ENCODE measurements at regions of chr17 and their contacts with region 1.

Region 1: GRCh38 chr17:40358323-40359038 is 6.1 kb downstream of the GJD3 start:
- DNase-seq: peak; percentile 88 to 97 (median 93)
- ATAC-seq: peak; percentile 74
- H3K4me3 ChIP-seq: no peak overlapping the region
- H3K4me1 ChIP-seq: peaks cover 4% of the 10 kb centered on the region
- CTCF ChIP-seq: peak; percentile 97

Region 2: GRCh38 chr17:40303009-40303657 is 55.3 kb before region 1 on chr17:
- intact Hi-C with region 1: loop called (anchors 2 to 5 kb)
- DNase-seq: peak in 1 of 3 donors; percentile 85
- ATAC-seq: peak; percentile 62
- H3K4me3 ChIP-seq: no peak overlapping the region
- H3K4me1 ChIP-seq: peaks cover 20% of the 10 kb centered on the region
- CTCF ChIP-seq: peak; percentile 43

Region 3: GRCh38 chr17:40417609-40418427 is 59.3 kb after region 1 on chr17 and contains the start of gene TOP2A:
- intact Hi-C with region 1: loop called in 1 of 2 experiments (anchors 10 kb)
- DNase-seq: peak; percentile 90 to 99 (median 96)
- ATAC-seq: peak; percentile 99
- H3K4me3 ChIP-seq: peak within 1 kb of the TSS; percentile 25
- H3K4me1 ChIP-seq: peaks cover 4% of the 10 kb centered on the region
- CTCF ChIP-seq: no peak
- total RNA-seq, gene TOP2A: 6.9 to 50.1 (median 11.4) TPM